Activated T-helper 1 cell treated with anti-CD3 and anti-CD28 coated beads, Interleukin-12 subunit alpha, Interleukin-12 subunit beta, Interleukin-2, Interleukin-4 antibody, amounts not matched to agents 30 ng/mL and 10 ng/mL and 1 ng/mL, durations not matched to agents 14 hours and 24 hours and 36 hours (primary cell): ENCODE measurements at regions of chr3 and their contacts with region 1.

Region 1: DNA sequence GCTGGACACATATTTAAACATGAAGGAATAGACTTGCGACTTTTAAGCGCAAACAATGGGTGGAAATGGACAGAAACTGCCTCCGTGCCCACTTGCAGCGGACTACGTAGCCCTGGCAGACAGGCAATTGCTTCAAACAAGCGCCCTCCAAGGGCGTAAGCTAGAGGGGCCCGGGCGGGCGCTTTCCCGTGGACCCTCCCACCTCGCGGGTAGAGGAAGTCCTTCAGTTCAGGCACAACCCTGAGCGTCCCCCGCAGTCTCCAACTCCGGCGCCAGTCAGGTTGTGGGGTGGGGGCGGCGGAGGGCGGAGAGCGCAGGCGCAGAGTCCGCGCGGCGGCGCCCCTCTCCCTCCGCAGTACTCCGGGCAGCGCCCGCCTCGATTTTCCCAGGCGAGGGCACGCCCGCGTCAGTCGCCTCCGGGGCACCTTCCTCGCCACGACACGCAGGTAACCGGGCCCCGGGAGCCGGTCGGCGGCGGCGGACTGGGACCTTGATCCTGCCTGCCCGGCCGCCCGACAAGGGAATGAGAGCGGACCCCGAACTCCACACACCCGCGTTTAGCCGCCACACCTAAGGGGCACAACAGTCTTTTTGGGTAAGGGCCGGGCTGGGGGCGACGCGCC is at the start of gene SLC35G2:
- DNase-seq: no peak
- H3K4me3 Mint-ChIP-seq: peak within 1 kb of the TSS; percentile 86
- H3K27ac Mint-ChIP-seq: peak within 1 kb of the TSS; percentile 74
- H3K4me1 Mint-ChIP-seq: peaks cover 27% of the 10 kb centered on the region
- H3K27me3 Mint-ChIP-seq: peaks cover 57% of the 10 kb centered on the region
- total RNA-seq, gene SLC35G2: 2.6 and 3.0 TPM in 2 replicates

Region 2: DNA sequence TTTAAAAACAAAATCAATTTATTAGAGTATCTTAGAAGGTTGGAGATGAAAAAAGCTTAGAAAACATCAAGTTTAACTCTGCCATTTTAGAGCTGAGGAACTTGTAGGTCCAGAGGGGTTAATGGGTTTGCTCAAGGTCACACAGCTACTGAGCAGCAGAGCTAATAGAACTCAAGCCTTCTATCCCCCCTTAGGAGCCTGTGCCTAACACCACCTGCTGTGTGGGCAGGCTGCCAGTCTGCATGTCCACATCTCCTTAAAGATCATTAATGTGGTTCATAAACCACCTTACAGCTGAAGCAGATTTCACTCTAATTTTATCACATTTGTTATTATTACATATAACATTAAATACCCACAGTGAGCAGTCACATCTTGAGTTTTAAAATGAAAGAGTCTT is 14.1 kb before region 1 on chr3:
- intact Hi-C with region 1: no loop called
- DNase-seq: no peak
- H3K4me3 Mint-ChIP-seq: no peak overlapping the region
- H3K27ac Mint-ChIP-seq: no peak overlapping the region
- H3K4me1 Mint-ChIP-seq: no peaks in the 10 kb centered on the region
- H3K27me3 Mint-ChIP-seq: peaks cover 18% of the 10 kb centered on the region

Region 3: DNA sequence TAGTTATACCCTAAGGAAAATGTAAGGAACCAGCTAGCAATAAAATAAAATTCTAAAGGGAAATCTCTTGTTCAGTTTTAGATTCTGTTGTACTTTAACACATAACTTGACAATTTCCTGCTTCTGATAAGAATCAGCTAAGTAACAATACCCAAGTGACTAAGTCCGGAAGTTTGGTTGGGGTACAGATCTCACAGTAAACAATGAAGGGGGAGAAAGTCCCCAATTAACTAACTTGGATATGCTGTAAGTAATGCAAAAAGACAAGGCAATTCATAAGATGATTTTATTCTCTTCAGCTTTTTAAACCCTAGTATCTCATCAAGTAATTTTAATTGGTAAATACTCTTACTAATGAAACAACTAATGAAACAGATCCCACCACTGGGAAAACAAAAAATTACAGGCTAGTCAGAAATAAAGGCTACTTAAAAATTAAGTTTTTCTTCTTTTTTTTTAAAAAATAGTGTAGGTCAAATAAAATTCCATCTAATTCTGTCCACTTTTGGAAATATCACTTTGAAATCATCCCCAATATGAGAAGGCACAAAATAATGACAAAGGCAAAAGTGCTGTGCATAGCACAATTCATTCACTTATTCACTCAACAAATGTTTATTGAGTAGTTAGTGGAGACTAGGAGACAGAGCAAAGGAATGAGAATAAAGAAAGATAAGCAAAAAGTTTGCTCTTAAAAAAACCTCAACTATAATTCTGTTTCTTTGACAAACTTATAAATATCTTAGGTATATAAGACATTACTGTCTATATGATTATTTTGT is 101.1 kb after region 1 on chr3:
- intact Hi-C with region 1: loop called (anchors 5 kb)
- DNase-seq: peak; percentile 33
- H3K4me3 Mint-ChIP-seq: peak overlapping the region; percentile 35
- H3K27ac Mint-ChIP-seq: peak overlapping the region; percentile 72
- H3K4me1 Mint-ChIP-seq: peaks cover 78% of the 10 kb centered on the region
- H3K27me3 Mint-ChIP-seq: no peaks in the 10 kb centered on the region